Right ventricle myocardium inferior (tissue), 1 donor: ENCODE measurements at regions of chr21 and their contacts with region 1.

Region 1: DNA sequence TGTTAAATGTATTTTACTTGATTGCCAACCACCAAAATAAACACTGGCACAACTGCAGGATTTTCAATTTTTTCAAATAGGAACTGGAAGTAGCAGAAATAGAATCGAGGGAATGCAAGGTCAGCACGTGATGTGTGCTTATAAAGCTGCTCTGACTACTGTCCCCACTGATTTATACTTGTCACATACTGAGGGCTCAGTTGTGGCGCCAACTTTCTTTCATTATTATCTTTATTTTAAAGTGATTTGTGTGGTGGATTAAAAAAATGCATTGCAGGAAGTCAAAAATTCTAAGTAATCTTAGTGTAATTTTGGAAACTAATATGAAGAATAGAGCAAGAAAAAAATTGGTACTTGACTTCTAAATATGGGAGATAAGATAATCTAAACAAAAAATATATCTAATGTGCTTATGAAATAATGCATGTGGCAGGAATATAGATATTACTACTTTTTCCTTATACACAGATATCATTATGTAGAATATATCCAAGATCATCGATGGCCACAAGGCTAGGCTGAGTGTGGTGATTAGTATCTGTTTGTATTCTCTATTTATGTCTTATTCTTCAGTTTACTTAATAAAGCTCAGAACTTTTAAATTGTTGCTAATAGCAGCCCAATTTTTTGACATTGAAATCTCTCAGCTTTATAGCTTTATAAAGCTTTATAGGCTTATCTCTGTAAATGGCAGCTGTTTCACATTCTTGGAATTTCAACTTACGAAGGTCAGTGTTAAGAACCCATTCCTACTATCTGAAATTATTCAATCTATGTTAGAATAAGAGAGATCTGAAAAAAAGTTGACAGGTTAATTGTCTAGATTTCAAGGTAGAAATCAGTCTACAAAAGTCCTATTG is 404.5 kb upstream of the ADAMTS5 start:
- DNase-seq: no peak
- ATAC-seq: no peak

Region 2: DNA sequence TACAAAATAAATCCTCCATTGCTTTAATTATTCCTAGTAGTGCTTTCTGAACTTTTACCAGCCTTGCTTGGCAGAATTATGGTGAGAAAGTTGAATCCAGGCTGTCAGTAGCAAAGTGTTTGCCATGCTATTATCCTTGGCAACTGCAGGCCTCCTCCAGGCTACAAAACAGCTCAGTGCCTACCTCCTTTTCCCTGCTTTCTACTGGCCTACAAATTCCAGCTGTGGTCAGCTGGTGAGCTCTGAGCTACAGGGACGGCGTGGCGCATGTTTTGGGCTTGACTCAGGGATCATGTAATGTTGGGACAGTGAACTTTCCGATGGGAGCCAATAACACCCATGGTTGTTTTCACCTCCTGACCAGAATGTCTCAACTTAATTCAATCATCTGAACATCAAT is 51.7 kb after region 1 on chr21:
- intact Hi-C with region 1: no loop called
- DNase-seq: peak; percentile 81
- ATAC-seq: peak; percentile 91

Region 3: DNA sequence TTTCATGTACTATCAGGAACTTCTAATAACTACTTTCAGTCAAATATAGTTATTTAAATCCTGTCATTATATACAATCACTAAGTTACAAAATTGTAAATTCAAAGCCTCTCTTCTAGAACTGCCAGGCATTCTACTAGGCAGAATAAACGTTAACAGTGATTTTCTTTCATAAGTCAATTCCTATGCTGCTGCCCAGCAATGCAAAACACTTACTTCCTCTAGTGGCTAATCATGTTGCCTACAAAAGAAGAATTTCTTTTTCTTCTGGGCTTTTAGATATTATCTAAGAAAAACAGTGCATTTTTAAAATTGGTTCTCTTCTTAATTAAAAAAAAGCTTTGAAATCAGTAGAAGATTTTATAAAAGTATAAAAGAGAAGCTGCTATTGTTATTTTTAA is 105.4 kb after region 1 on chr21:
- intact Hi-C with region 1: loop called (anchors 10 kb)
- DNase-seq: no peak
- ATAC-seq: no peak

Region 4: GRCh38 chr21:27550287-27550686 is 178.9 kb after region 1 on chr21:
- intact Hi-C with region 1: loop called (anchors 5 kb)
- DNase-seq: no peak
- ATAC-seq: peak; percentile 23